ENCODE measurements at regions of chr18 and their contacts with region 1.

Region 1: GRCh38 chr18:74196220-74197119 is 48.1 kb downstream of the TIMM21 start:
- DNase-seq: no peak
- ATAC-seq: peak; percentile 95
- H3K4me3 Mint-ChIP-seq: peak overlapping the region; percentile 78
- H3K27ac Mint-ChIP-seq: peak overlapping the region; percentile 79
- H3K4me1 Mint-ChIP-seq: peaks cover 22% of the 10 kb centered on the region
- H3K27me3 Mint-ChIP-seq: peaks cover 8% of the 10 kb centered on the region
- CTCF ChIP-seq: no peak

Region 2: DNA sequence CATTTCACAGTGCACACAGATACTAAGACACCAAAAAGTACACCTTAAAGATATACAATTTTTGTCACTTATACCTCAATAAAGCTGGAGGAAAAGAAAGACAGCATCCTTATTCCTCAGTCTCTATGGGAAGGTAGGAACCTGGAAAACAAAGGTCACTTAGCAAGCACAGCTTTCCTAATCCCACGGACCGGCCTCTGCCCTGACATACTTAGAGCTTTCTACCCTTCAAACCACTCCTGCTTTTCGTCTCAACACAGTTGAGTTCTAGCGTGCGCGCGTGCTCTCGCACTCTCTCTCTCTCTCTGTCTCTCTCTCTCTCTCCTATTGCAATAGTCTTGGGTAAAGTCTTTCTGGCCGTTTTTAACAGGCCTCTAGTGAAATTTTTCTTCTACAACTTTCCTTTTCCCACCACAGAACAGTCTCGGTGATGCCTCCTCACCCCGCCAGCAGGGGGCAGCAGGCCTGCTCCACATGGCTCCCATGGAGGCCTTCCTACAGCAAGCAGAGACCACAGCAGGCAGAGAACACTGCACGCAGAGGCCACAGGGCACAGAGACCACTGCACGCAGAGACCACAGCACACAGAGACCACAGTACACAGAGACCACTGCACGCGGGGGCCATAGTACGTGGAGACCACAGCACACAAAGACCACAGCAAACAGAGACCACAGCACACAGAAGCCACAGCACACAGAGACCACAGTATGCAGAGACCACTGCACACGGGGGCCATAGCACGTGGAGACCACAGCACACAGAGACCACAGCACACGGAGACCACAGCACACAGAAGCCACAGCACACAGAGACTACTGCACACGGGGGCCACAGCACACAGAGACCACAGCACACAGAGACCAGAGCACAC is 155.8 kb before region 1 on chr18:
- CTCF ChIA-PET with region 1: no interaction called
- POLR2A ChIA-PET with region 1: no interaction called
- intact Hi-C with region 1: loop called (anchors 1 kb)
- DNase-seq: peak; percentile 49
- ATAC-seq: peak; percentile 69
- H3K4me3 Mint-ChIP-seq: no peak overlapping the region
- H3K27ac Mint-ChIP-seq: no peak overlapping the region
- H3K4me1 Mint-ChIP-seq: peaks cover 16% of the 10 kb centered on the region
- H3K27me3 Mint-ChIP-seq: no peaks in the 10 kb centered on the region
- CTCF ChIP-seq: no peak

Region 3: DNA sequence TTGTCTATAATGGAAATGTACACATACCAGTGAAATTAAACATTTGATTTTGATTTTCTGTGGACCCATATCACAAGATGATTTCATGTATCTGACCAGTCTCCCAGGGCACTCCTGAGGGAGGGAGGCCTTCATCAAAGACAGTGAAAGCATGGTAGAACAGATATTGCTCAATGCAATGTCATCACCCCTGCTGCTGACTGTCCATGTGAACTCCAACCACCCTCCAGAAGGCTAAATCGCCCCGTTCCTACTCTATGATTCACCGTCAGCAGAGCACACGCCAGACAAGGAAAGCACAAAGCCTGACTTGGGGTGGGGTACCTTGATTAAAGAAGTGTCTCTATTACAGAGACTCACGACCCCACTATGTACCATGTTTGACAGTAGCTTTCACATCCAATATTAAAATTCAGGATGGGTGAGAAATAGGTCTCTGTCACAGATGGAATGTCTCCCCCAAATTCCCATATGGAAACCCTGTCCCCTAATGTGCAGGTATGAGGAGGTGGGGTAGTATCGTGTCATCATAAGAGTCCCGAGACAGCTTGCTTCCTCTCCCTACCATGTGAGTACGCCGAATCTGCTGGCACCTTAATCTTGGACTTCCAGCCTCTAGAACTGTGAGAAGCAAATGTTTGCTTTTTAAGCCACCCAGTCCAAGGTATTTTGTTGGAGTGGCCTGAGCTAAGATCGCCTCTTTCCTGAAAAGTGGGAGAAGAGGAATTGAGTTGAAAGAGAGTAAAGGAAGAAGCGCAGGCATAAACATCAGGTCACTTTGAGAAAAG is 52.9 kb after region 1 on chr18:
- CTCF ChIA-PET with region 1: interaction called, 3 read pairs
- POLR2A ChIA-PET with region 1: no interaction called
- intact Hi-C with region 1: loop called (anchors 2 kb)
- DNase-seq: no peak
- ATAC-seq: no peak
- H3K4me3 Mint-ChIP-seq: peak overlapping the region; percentile 6
- H3K27ac Mint-ChIP-seq: peak overlapping the region; percentile 80
- H3K4me1 Mint-ChIP-seq: peaks cover 51% of the 10 kb centered on the region
- H3K27me3 Mint-ChIP-seq: no peaks in the 10 kb centered on the region
- CTCF ChIP-seq: no peak

Region 4: DNA sequence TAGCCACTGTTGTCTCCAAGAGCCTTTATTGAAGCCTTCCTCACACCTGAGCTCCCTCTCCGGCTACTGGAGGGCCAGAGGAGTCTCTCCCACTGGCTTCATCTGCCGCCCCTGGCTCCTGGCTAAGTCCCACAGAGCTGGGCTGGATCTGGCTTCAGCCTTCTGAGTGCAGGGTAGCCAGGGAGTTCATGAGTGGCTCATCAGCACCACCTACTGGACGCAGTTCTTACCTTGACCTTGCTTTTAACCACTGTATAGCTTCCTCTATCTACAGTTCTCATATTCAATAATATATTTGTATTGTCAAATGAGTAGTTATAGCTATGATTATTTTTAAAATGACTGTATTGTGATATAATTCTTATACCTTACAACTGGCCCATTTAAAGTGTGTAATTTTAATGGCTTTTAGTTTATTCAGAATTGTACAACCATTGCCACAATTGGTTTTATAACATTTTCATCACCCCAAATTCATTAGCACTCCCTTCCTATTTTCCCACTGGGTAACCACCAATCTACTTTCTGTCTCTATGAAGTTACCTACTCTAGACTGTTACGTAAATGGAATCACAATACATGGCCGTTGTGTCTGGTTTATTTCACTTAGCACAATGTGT is 355.6 kb after region 1 on chr18:
- CTCF ChIA-PET with region 1: interaction called, 16 read pairs
- POLR2A ChIA-PET with region 1: no interaction called
- intact Hi-C with region 1: loop called (anchors 1 kb)
- DNase-seq: peak; percentile 41
- ATAC-seq: peak; percentile 97
- H3K4me3 Mint-ChIP-seq: no peak overlapping the region
- H3K27ac Mint-ChIP-seq: no peak overlapping the region
- H3K4me1 Mint-ChIP-seq: no peaks in the 10 kb centered on the region
- H3K27me3 Mint-ChIP-seq: peaks cover 14% of the 10 kb centered on the region
- CTCF ChIP-seq: no peak